ENCODE measurements at regions of chr12 and their contacts with region 1.

Region 1: DNA sequence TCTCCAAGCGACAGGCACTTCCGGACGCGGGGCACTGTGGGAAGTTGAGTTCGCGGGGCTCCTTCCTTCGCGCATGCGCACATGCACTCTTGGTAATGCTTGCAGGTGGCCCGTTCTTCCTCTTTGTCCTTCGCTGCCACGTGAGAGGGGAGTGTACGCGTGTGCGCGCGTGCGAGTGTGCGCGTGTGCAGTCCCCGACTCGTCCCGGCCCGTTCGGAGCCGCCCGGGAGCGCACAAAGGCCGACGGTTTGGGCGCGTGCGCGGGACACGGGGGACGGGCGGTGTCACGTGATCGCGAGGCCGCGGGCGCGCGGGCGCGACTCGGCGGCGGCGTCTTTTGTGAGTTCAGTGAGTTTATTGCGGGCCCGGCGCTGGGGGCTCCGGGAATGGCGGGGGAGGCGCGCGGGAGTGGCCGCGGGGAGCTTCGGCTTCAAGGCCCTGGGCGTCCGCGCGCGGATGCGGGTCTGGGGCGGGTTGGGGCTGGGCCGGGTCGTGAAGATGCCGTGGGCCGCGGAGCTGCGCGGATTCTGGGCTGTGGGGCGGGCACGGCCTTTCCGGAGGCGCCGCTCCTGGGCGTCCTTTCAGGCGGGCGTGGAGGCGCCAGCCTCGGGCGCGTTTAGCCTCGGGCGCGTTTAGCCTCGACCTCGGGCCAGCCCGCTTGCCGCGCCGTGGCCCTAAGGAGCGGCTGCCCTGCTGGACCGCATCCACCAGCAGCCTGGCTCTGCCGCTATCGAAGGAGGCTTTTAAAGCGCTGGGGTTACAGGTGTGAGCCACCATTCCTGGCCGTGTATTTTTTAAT is at the start of gene ZNF84:
- DNase-seq: peak; percentile 97
- H3K4me3 Mint-ChIP-seq: peak within 1 kb of the TSS; percentile 88
- H3K27ac Mint-ChIP-seq: peak within 1 kb of the TSS; percentile 98
- H3K4me1 Mint-ChIP-seq: peaks cover 6% of the 10 kb centered on the region
- H3K27me3 Mint-ChIP-seq: no peaks in the 10 kb centered on the region
- total RNA-seq, gene ZNF84: 20.7 and 21.3 TPM in 2 replicates

Region 2: GRCh38 chr12:132908145-132909044 is 129.0 kb before region 1 on chr12:
- intact Hi-C with region 1: loop called (anchors 5 kb)
- DNase-seq: peak; percentile 93
- H3K4me3 Mint-ChIP-seq: peak overlapping the region; percentile 86
- H3K27ac Mint-ChIP-seq: peak overlapping the region; percentile 94
- H3K4me1 Mint-ChIP-seq: peaks cover 4% of the 10 kb centered on the region
- H3K27me3 Mint-ChIP-seq: peaks cover 13% of the 10 kb centered on the region

Region 3: DNA sequence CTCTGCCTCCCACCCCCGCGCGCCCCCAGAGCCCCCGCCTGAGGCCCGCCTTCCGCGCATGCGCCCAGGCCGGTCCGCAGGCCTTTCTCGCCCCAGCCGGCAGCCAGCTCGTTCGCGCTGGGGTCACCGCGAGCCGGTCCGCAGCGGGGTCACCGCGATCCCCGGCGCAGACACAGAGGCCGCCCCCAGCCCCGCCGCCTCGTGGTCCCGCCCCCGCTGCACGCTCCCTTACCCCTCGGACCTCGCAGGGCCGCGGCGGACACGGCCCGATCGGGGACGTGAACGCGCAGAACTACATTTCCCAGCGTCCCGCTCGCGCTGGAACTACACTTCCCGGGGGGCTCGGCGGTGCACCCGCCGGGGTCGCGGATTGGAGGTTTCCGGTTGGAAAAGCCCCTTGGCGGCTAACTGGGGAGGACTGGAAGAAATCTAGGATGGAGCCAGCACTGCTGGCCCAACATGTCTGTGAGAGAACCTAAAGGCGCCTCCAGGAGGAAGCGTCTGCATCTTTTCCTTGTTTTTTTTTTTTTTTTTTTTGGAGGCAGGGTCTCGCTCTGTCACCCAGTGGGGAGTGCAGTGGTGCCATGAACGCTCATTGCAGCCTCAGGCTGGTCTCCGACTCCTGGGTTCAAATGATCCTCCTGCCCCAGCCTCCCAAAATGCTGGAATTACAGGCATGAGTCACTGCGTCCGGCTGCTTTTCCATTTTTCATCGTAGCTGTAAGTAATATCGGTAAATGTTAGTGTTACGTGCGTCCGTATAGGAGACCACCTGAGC is 81.2 kb before region 1 on chr12 and contains the start of gene ZNF605:
- intact Hi-C with region 1: loop called (anchors 1 kb)
- DNase-seq: peak; percentile 82
- H3K4me3 Mint-ChIP-seq: peak within 1 kb of the TSS; percentile 96
- H3K27ac Mint-ChIP-seq: peak within 1 kb of the TSS; percentile 96
- H3K4me1 Mint-ChIP-seq: peaks cover 12% of the 10 kb centered on the region
- H3K27me3 Mint-ChIP-seq: no peaks in the 10 kb centered on the region
- total RNA-seq, gene ZNF605: 7.3 and 8.2 TPM in 2 replicates

Region 4: DNA sequence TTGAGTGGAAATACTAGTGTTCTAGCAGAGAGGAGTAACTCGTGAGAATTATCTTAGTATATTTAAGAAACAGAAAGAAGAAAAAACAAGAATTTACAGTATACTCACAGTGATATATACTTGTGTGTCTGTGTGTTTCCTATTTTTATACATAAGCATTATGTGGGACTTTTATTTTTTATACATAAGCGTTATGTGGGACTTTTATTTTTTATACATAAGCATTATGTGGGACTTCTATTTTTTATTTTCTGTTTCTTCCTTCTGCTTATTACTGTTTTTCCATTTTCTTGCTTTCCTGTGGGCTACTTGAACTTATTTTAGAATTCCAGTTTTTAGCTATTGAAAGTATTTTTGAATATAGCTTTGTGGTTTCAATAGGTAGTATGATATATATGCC is 36.4 kb after region 1 on chr12:
- intact Hi-C with region 1: no loop called
- DNase-seq: no peak
- H3K4me3 Mint-ChIP-seq: no peak overlapping the region
- H3K27ac Mint-ChIP-seq: no peak overlapping the region
- H3K4me1 Mint-ChIP-seq: no peaks in the 10 kb centered on the region
- H3K27me3 Mint-ChIP-seq: no peaks in the 10 kb centered on the region

Region 5: DNA sequence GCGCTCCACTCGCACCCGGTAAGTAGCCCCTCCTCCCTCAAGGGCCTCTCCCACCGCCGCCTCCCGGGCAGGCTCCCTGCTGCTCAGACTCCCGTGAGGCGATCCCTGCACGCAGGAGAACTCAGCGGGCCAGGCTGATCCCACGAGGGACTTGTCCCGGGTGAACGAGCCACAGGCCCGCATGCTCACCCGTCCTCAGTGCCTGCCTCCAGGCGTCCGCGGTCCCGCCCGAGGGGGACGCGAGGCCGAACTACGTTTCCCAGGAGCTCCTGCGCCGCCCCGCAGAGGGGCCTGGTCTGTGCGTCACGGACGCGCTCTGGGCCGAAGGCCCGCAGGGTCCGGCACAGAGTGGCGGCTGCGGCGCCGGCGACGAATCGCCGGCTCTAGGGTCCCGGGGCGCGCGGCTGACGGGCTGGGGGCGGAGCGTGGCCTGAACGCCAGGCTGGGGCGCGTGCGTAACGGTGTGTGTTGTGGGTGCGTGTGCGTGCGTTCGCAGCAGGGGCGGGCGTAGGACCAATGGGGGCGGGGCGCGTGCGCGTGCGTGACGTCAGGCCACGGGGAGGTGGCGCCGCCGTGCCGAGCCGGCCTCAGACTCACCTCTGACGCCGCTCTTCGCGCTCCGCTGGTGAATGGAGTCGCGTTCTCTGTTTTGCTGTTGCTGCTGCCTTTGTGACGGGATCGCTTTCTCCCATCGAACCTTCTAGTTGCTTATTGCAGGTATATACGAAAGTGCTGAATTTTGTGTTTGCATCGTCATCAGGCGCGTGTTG is 92.8 kb after region 1 on chr12 and contains the starts of genes ZNF10 and ZNF891:
- intact Hi-C with region 1: loop called (anchors 1 kb)
- DNase-seq: peak; percentile 94
- H3K4me3 Mint-ChIP-seq: peak within 1 kb of the TSS; percentile 92
- H3K27ac Mint-ChIP-seq: peak within 1 kb of the TSS; percentile 99
- H3K4me1 Mint-ChIP-seq: peaks cover 11% of the 10 kb centered on the region
- H3K27me3 Mint-ChIP-seq: no peaks in the 10 kb centered on the region
- total RNA-seq, gene ZNF10: 4.9 and 6.3 TPM in 2 replicates
- total RNA-seq, gene ZNF891: 2.0 and 2.3 TPM in 2 replicates

Region 6: DNA sequence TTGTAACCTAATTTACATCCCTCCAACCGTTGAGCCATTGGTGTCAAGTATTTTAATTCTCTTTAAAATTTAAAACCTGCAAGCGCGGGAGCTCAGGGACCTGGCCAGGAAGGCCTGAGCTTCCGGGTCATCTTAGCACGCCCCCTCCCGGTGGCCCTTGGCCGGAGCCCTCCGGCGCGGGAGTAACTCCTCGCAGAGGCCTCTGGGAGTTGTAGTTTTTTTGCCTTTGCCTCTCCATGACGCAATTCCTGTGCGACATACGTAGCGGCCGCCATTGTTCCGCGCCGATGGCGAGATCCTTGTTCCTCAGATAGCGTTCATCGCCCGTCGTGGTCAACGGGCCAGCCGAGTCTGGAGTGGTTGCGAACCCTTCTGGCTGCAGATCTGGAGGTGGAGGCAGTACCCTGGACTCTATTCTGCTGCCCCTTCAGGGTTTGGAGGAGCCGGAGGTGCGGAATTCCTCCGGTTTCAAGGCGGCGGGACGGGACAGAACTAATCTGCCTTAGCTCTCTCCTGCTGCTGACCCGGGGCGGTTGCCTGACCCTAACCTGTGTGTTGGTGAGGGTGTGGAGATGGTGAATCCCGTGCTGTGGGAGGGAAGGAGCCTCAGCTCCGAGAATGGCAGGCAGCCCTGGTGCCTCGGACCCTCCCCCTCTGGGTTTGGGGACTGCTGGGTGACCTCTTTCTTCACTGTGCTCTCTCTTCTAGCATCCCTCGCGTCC is 144.0 kb after region 1 on chr12 and contains the start of gene ZNF268:
- intact Hi-C with region 1: loop called (anchors 1 kb)
- DNase-seq: peak; percentile 88
- H3K4me3 Mint-ChIP-seq: peak within 1 kb of the TSS; percentile 99
- H3K27ac Mint-ChIP-seq: peak within 1 kb of the TSS; percentile 95
- H3K4me1 Mint-ChIP-seq: peaks cover 1% of the 10 kb centered on the region
- H3K27me3 Mint-ChIP-seq: no peaks in the 10 kb centered on the region
- total RNA-seq, gene ZNF268: 12.7 and 17.2 TPM in 2 replicates